GM12878 (cell line): ENCODE measurements at regions of chr21 and their contacts with region 1.

Region 1: DNA sequence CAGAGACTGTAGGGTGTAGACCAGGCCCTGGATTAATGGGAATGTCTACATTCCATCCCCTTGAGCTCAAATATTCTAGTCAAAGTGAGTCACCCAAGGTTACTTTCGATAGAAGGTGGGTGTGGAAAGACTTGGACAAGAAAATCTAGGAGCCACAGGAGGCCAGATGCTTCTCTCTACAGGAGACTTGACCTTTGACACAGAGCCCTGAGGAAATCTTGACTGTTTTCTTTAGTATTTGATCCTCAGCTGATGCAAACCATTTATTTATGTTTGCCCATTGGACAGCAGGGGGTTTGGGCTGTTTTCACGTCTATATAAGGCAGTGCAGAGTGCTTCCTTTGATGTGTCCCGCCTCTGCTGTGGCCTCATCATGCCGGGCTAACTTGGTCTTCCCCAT is 15.7 kb upstream of the MAP3K7CL start:
- DNase-seq: no peak
- ATAC-seq: no peak
- H3K4me3 ChIP-seq: no peak overlapping the region
- H3K27ac ChIP-seq: no peak overlapping the region
- H3K4me1 ChIP-seq: peaks cover 10% of the 10 kb centered on the region
- H3K27me3 ChIP-seq: no peaks in the 10 kb centered on the region
- CTCF ChIP-seq: no peak
- EP300 ChIP-seq: no peak
- POLR2A ChIP-seq: no peak
- RAD21 ChIP-seq: no peak

Region 2: GRCh38 chr21:29098156-29098555 is 16.6 kb before region 1 on chr21:
- CTCF ChIA-PET with region 1: interaction called, 4 read pairs
- POLR2A ChIA-PET with region 1: no interaction called
- RAD21 ChIA-PET with region 1: no interaction called
- SMC1A ChIA-PET with region 1: interaction called, 37 read pairs
- in situ Hi-C with region 1: no loop called
- intact Hi-C with region 1: no loop called
- DNase-seq: no peak
- ATAC-seq: no peak
- H3K4me3 ChIP-seq: no peak overlapping the region
- H3K27ac ChIP-seq: no peak overlapping the region
- H3K4me1 ChIP-seq: no peaks in the 10 kb centered on the region
- H3K27me3 ChIP-seq: no peaks in the 10 kb centered on the region
- CTCF ChIP-seq: no peak
- EP300 ChIP-seq: no peak
- POLR2A ChIP-seq: no peak
- RAD21 ChIP-seq: no peak

Region 3: GRCh38 chr21:29104239-29104708 is 10.5 kb before region 1 on chr21:
- CTCF ChIA-PET with region 1: interaction called, 5 read pairs
- POLR2A ChIA-PET with region 1: no interaction called
- RAD21 ChIA-PET with region 1: no interaction called
- SMC1A ChIA-PET with region 1: interaction called, 37 read pairs
- in situ Hi-C with region 1: no loop called
- intact Hi-C with region 1: no loop called
- DNase-seq: no peak
- ATAC-seq: peak; percentile 89
- H3K4me3 ChIP-seq: no peak overlapping the region
- H3K27ac ChIP-seq: 0 out of 2 replicates have a peak overlapping the region, but pooled peaks have one; percentile 4
- H3K4me1 ChIP-seq: peaks cover 13% of the 10 kb centered on the region
- H3K27me3 ChIP-seq: no peaks in the 10 kb centered on the region
- CTCF ChIP-seq: no peak; a peak in 1 of 6 replicates
- EP300 ChIP-seq: no peak
- POLR2A ChIP-seq: no peak
- RAD21 ChIP-seq: no peak